Spleen (tissue), 13 donors: ENCODE measurements at regions of chr11 and their contacts with region 1.

Region 1: GRCh38 chr11:81080476-81080875 is 1639.6 kb upstream of the TENM4 start:
- DNase-seq: no peak
- H3K4me3 ChIP-seq: no peak overlapping the region
- H3K27ac ChIP-seq: no peak overlapping the region
- H3K4me1 ChIP-seq: no peaks in the 10 kb centered on the region
- H3K27me3 ChIP-seq: no peaks in the 10 kb centered on the region
- CTCF ChIP-seq: no peak
- POLR2A ChIP-seq: no peak

Region 2: GRCh38 chr11:81135570-81135969 is 55.1 kb after region 1 on chr11:
- intact Hi-C with region 1: loop called (anchors 10 kb)
- DNase-seq: no peak
- H3K4me3 ChIP-seq: no peak overlapping the region
- H3K27ac ChIP-seq: no peak overlapping the region
- H3K4me1 ChIP-seq: no peaks in the 10 kb centered on the region
- H3K27me3 ChIP-seq: no peaks in the 10 kb centered on the region
- CTCF ChIP-seq: no peak
- POLR2A ChIP-seq: no peak